Activated CD8-positive, alpha-beta T cell treated with anti-CD3 and anti-CD28 coated beads for 36 hours (primary cell): ENCODE measurements at regions of chr2 and their contacts with region 1.

Region 1: DNA sequence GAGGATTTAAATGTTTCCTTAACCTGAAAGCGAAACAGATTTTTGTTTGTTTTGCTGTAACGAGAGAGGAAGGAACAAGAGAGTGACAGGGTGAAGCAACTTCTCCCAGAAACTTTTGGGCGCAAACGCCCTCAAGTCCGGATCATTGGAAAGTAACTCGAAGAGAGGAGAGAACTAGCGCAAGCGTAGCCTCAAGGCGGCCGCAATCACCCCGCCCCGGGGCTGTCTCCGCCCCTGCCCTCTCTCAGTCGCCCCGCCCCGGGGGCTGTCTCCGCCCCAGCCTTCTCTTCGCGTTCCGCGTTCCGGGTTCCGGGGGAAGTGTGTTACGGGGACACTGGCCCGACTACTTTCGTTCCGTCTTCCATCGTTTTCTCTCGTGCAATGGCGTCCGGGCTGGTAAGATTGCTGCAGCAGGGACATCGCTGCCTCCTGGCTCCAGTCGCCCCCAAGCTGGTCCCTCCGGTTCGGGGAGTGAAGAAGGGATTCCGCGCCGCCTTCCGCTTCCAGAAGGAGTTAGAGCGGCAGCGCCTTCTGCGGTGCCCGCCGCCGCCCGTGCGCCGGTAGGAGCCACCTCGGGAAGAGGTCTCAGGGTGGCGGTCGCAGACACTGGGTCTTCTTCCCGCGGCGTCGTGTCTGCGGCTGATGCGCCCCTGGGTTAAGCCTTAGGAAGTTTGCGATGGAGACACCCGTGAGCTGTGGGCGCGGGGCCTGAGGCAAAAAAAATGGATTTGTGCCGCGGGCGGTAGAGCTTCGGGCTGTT is at the start of gene MRPL44:
- DNase-seq: peak; percentile 97
- ATAC-seq: peak; percentile 99
- H3K4me3 Mint-ChIP-seq: peak within 1 kb of the TSS; percentile 93
- H3K27ac Mint-ChIP-seq: peak within 1 kb of the TSS; percentile 90
- H3K4me1 Mint-ChIP-seq: peaks cover 72% of the 10 kb centered on the region
- H3K27me3 Mint-ChIP-seq: no peaks in the 10 kb centered on the region
- CTCF ChIP-seq: no peak
- total RNA-seq, gene MRPL44: 37.8 to 40.4 TPM

Region 2: DNA sequence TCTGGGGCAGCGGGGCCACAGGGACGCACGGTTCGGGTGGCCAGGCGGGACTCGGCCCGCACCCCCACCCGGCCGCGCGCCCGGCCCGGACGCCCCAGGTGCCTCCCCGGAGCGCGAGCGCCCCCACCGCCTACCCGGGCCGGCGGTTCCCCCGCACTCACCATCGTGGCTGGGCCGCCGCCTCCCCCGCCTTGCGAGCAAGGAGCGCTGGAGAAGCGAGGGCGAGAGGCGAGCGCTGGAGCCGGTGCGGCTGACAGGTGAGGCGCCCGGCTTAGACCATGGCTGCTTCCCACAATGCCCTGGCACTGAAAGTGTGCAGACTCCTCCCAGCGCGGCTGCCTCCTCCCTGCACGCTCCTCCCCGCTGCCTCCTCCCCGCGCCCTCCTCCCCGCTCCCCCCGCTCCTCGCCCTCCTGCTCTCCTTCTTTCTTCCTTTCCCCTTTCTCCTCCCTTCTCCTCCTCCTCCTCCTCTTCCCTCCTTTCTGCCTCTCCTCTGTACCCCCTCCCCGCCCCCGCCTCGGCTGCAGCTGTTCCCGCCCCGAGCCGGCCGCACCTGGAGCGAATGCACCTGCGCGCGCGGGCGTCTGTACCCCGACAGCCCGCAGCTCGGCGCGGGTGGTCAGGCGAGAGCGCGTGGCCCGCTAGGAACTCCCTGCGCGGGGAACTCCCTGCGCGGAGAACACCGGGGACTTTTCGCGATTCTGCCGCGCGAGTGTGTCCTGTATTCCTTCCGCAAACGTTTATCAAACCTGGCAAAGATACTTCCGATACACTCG is 119.8 kb before region 1 on chr2 and contains the start of gene AP1S3:
- CTCF ChIA-PET with region 1: no interaction called
- POLR2A ChIA-PET with region 1: no interaction called
- intact Hi-C with region 1: loop called (anchors 5 kb)
- DNase-seq: peak; percentile 79
- ATAC-seq: peak; percentile 96
- H3K4me3 Mint-ChIP-seq: peak within 1 kb of the TSS; percentile 93
- H3K27ac Mint-ChIP-seq: peak within 1 kb of the TSS; percentile 71
- H3K4me1 Mint-ChIP-seq: peaks cover 14% of the 10 kb centered on the region
- H3K27me3 Mint-ChIP-seq: peaks cover 3% of the 10 kb centered on the region
- CTCF ChIP-seq: no peak
- total RNA-seq, gene AP1S3: 5.7 to 6.6 TPM

Region 3: DNA sequence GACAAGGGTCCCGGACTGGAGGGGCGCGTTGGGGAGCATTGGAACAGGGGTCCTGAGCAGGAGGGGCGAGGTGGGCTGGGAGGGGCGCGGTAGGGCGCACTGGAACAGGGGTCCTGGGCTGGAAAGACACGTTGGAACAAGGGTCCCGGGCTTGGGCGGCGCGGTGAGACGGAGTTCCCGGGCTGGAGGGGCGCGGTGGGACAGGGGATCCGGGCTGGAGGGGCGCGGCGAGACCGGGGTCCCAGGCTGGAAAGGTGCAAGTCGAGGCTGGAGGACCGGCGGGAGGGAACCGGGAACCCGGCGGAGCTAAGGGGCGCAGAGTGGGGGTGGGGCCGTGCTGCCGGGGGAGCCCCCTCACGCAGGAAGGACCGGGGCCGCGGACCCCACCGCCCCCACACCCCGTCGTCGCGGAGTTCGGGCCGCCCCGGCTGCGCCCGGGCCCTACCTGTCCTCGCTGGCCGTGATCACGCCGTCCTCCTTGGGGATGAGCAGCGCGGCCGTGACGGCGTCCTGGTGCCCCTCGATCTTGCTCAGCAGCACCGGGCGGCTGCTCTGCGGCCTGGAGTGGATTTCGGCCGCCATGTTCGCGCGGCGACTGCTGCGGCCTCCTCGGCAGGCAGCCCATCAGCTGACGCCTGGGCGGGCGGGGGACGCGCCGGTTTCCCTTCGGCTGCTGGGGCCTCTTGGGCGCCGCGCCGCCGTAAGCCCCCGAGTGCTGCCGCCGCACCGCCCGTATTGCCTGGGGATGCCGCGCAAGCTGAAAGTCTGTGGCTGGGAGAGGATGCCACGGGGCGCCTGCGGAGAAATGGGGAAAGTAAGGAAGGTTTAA is 12.4 kb before region 1 on chr2 and contains the start of gene WDFY1:
- CTCF ChIA-PET with region 1: interaction called, 5 read pairs
- POLR2A ChIA-PET with region 1: interaction called, 84 read pairs
- intact Hi-C with region 1: no loop called
- DNase-seq: peak; percentile 88
- ATAC-seq: peak; percentile 66
- H3K4me3 Mint-ChIP-seq: peak within 1 kb of the TSS; percentile 92
- H3K27ac Mint-ChIP-seq: peak within 1 kb of the TSS; percentile 93
- H3K4me1 Mint-ChIP-seq: peaks cover 48% of the 10 kb centered on the region
- H3K27me3 Mint-ChIP-seq: no peaks in the 10 kb centered on the region
- CTCF ChIP-seq: no peak
- total RNA-seq, gene WDFY1: 20.8 to 23.1 TPM